Activated T-helper 2 cell treated with anti-CD3 and anti-CD28 coated beads, Interferon-gamma antibody, Interleukin-2, Interleukin-4, amounts not matched to agents 10 μg/mL and 5 μg/mL and 100 μg/mL, durations not matched to agents 14 hours and 24 hours and 36 hours (primary cell): ENCODE measurements at regions of chr12 and their contacts with region 1.

Region 1: DNA sequence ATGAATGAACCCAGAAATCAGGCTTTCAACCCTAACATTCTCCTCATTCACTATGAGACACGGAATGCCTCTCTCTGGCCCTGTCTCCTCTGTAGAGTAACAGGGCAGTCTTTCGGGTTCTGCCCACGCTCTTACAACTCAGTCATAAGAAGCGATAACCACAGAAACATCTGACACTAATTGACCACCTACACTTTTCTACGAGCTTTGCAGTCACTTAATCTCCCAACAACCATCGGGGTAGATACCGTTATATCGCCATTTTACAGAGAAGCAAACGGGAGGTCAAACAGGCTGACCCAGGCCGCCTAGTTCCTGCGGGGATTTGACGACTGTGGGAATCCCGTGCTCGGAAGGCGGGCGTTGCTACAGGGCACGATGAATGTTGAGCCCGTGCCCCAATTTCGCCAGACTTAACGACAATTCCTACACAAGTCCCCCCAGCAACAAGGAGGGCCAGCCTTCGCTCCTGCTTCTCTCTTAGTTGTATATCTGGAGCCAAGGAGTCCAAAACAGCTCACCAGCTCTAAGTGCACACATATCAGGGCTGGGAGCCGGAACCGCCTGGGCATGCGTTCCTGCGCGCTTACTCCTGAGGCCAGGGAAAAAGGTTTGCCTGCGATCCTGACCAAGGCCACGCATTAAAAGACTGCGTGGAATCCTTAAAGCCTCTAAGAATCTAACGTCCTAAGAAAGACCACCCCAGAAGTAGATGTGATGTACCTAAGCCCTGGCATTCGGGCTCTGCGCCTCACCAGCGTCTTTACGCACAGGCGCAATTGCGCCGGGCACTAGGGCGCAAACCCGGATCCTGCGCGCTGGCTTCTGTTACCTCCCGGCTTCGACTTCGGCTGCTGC is 38.7 kb upstream of the TBX5 start:
- DNase-seq: no peak
- H3K4me3 Mint-ChIP-seq: no peak overlapping the region
- H3K27ac Mint-ChIP-seq: no peak overlapping the region
- H3K4me1 Mint-ChIP-seq: no peaks in the 10 kb centered on the region
- H3K27me3 Mint-ChIP-seq: peaks cover 87% of the 10 kb centered on the region

Region 2: DNA sequence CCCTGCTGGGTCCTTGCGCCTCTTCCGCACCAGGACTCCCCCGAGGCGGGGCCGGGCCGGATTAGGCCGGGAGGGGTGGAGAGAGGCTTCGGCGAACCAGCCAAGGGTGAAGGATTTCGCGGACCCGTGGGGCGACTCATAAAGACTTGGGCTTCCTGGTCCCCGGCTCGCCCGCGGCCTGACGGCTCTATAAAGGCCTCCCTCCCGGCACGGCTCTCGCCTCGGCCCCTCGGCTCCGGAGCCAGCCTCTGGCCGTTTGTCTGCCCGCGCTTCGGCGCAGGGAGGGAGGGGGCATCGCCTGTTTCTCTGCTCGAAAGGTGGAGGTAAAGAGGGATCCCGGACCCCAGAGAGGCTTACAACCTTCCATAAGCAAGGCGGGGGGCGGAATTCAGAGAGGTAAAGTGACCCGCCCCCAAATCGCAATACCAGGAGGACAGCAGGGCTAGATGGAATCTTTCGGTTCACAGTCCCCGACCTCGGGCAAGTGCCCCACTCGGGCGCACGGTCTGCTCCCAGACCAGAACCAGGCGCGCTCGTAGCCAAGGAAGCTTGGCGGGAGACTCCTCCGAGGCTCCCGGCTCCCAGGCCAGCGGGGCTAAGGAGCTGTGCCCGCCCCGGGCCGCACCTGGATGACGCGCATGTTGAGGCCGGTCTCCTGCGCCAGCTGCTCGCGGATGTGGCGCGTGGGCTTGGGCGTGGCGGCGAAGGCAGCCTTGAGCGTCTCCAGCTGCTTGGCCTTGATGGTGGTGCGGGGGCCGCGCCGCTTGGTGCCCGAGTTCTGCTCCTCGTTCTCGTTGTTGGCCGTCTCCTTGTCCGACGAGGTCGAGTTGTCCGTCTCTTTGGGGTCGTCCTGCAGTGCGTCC is 976.9 kb before region 1 on chr12:
- intact Hi-C with region 1: loop called (anchors 2 kb)
- DNase-seq: no peak
- H3K4me3 Mint-ChIP-seq: no peak overlapping the region
- H3K27ac Mint-ChIP-seq: no peak overlapping the region
- H3K4me1 Mint-ChIP-seq: peaks cover 6% of the 10 kb centered on the region
- H3K27me3 Mint-ChIP-seq: peaks cover 69% of the 10 kb centered on the region

Region 3: GRCh38 chr12:114408886-114409851 is 35.5 kb before region 1 on chr12:
- intact Hi-C with region 1: loop called (anchors 1 kb)
- DNase-seq: no peak
- H3K4me3 Mint-ChIP-seq: no peak overlapping the region
- H3K27ac Mint-ChIP-seq: peak overlapping the region; percentile 28
- H3K4me1 Mint-ChIP-seq: no peaks in the 10 kb centered on the region
- H3K27me3 Mint-ChIP-seq: peaks cover 91% of the 10 kb centered on the region

Region 4: DNA sequence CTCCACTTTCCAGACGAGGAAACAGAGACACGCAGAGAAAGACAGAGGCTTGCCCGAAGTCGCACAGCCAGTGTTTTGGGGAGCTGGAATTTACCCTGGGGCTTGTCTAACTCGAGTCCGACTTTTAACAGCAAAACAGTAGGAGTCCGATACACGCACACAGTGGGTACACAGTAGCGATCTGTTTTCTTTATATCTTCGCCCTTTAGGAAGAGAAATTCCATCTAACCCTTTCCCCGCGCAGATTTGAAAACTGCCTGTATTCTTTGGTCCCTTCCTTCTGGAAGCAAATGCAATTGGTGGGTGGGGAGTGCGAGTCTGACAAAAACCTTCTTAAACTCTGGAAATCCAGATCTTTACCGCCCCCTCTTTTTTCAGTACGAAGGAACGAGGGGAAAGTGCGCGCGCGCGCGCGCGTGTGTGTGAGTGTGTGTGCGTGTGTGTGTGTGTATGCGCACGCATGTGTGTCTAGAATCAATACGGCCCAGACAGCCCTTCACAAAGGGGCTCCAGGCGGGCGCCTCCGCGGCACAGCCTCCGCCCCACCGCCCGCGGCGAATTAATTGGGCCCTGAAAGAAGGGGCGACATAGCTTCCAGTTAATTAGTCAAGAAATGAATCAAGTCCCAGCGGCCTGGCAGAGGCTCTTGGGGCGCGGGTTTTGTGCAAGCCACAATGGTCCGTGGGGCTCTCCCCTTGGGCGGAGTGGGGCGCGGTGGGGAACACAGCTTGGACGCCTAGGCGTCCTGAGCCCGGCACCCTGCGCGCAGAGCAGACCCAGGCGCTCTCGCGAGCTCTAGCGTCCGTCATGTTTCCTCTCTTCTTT is 253.3 kb after region 1 on chr12:
- intact Hi-C with region 1: loop called (anchors 5 kb)
- DNase-seq: no peak
- H3K4me3 Mint-ChIP-seq: no peak overlapping the region
- H3K27ac Mint-ChIP-seq: no peak overlapping the region
- H3K4me1 Mint-ChIP-seq: no peaks in the 10 kb centered on the region
- H3K27me3 Mint-ChIP-seq: peaks cover 88% of the 10 kb centered on the region